ENCODE measurements at regions of chr9 and their contacts with region 1.

Region 1: DNA sequence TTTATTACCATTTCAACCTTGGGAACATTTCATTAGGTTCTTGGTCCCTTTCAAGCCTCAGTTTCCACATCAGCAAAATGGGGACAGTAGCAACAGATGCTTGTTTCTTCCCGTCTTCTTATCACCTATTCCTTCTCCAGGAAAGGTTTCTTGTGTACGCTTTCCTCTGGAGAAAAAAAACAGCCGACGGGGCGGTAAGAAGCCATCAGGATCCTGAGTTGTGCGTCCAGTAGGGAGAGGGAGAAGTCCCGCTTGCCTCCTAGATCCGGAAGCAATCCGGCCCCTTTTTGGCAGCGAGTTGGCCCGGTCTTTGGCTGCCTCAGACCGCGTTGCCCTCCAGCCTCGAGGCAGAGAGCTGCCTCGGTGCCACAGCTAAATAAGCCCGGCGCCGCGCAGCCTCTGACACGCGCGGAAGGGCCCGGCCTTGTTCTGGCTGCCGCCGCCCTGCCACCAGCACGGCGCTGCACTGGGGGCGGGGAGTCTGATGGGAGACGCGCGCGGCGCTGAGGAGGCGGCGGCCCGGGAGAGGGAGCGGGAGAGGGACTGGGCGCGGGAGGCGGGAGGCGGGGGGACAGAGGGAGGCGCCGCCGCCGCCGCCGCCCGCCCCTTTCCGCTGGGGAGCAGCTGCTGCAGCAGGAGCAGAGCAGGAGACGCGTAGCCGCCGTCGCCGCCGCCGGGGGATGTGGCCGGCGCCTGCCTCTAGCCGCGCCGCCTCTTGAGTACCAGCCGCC is at the start of gene SLC44A1:
- DNase-seq: peak; percentile 95
- H3K4me3 Mint-ChIP-seq: peak within 1 kb of the TSS; percentile 83
- H3K27ac Mint-ChIP-seq: peak within 1 kb of the TSS; percentile 76
- H3K4me1 Mint-ChIP-seq: peaks cover 15% of the 10 kb centered on the region
- H3K27me3 Mint-ChIP-seq: peaks cover 14% of the 10 kb centered on the region
- total RNA-seq, gene SLC44A1: 17.6 to 18.6 TPM

Region 2: GRCh38 chr9:104765138-104765537 is 479.0 kb before region 1 on chr9:
- CTCF ChIA-PET with region 1: no interaction called
- intact Hi-C with region 1: loop called (anchors 5 kb)
- DNase-seq: no peak
- H3K4me3 Mint-ChIP-seq: peak overlapping the region; percentile 82
- H3K27ac Mint-ChIP-seq: no peak overlapping the region
- H3K4me1 Mint-ChIP-seq: peaks cover 6% of the 10 kb centered on the region
- H3K27me3 Mint-ChIP-seq: no peaks in the 10 kb centered on the region

Region 3: GRCh38 chr9:104997536-104997935 is 246.6 kb before region 1 on chr9:
- CTCF ChIA-PET with region 1: no interaction called
- intact Hi-C with region 1: no loop called
- DNase-seq: no peak
- H3K4me3 Mint-ChIP-seq: no peak overlapping the region
- H3K27ac Mint-ChIP-seq: no peak overlapping the region
- H3K4me1 Mint-ChIP-seq: peaks cover 22% of the 10 kb centered on the region
- H3K27me3 Mint-ChIP-seq: peaks cover 5% of the 10 kb centered on the region

Region 4: GRCh38 chr9:105264380-105264779 is 20.2 kb after region 1 on chr9:
- CTCF ChIA-PET with region 1: no interaction called
- intact Hi-C with region 1: loop called (anchors 2 kb)
- DNase-seq: peak; percentile 14
- H3K4me3 Mint-ChIP-seq: no peak overlapping the region
- H3K27ac Mint-ChIP-seq: peak overlapping the region; percentile 30
- H3K4me1 Mint-ChIP-seq: peaks cover 24% of the 10 kb centered on the region
- H3K27me3 Mint-ChIP-seq: no peaks in the 10 kb centered on the region

Region 5: GRCh38 chr9:105385381-105385985 is 141.3 kb after region 1 on chr9:
- CTCF ChIA-PET with region 1: no interaction called
- intact Hi-C with region 1: loop called (anchors 1 kb)
- DNase-seq: peak; percentile 50
- H3K4me3 Mint-ChIP-seq: peak overlapping the region; percentile 78
- H3K27ac Mint-ChIP-seq: no peak overlapping the region
- H3K4me1 Mint-ChIP-seq: peaks cover 12% of the 10 kb centered on the region
- H3K27me3 Mint-ChIP-seq: no peaks in the 10 kb centered on the region

Region 6: GRCh38 chr9:105447814-105448812 is 203.9 kb after region 1 on chr9 and contains the start of gene FSD1L:
- CTCF ChIA-PET with region 1: no interaction called
- intact Hi-C with region 1: loop called (anchors 1 kb)
- DNase-seq: peak; percentile 87
- H3K4me3 Mint-ChIP-seq: peak within 1 kb of the TSS; percentile 79
- H3K27ac Mint-ChIP-seq: no peak within 1 kb of the TSS
- H3K4me1 Mint-ChIP-seq: peaks cover 10% of the 10 kb centered on the region
- H3K27me3 Mint-ChIP-seq: no peaks in the 10 kb centered on the region
- total RNA-seq, gene FSD1L: 0.79 to 0.86 TPM

Region 7: GRCh38 chr9:105694190-105694847 is 450.2 kb after region 1 on chr9 and contains the start of gene TMEM38B:
- CTCF ChIA-PET with region 1: no interaction called
- intact Hi-C with region 1: loop called (anchors 1 kb)
- DNase-seq: peak; percentile 76
- H3K4me3 Mint-ChIP-seq: peak within 1 kb of the TSS; percentile 90
- H3K27ac Mint-ChIP-seq: peak within 1 kb of the TSS; percentile 75
- H3K4me1 Mint-ChIP-seq: peaks cover 33% of the 10 kb centered on the region
- H3K27me3 Mint-ChIP-seq: peaks cover 10% of the 10 kb centered on the region
- total RNA-seq, gene TMEM38B: 17.6 TPM